ENCODE measurements at regions of chr11 and their contacts with region 1.

Region 1: DNA sequence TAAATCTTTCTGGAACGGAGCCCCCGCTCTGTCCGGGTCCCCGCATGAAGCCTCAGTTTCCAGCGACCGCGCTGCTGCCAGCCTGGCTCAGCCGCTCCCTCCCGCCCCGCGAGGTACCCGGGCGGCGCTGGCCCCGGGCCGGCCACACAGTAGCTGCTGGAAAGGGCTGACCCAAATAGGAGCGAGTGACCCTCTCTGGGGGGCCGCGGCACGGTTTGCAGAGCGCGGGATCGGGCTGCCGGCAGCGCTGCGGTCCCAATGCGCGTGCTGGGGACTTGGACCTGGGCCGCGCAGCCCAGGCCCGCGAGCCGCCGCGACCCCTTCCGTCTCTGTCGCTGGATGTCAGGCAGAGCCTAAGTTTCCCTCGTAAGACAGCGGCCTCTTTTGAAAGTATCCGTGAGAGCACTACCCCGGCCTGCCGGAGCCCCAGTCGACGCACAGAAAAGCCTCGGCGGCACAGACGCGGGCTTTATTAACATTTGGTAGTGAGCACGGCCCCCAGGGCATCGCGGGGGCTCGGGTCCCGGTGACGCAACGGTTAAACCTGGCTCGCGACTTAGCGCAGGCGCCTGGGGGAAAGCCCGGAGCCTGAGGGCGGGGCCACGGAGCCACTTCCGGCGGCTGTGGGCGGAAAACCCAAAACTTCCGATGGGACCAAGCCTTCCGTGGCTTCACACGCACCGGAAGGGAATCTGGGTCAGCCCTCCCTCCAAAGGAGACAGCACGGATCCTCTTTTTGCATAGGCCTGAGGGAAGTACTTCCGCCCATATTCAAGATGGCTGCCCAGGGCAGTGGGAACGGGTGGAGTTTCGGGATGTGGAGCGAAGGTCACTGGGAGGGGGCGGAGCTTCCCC is 14.9 kb downstream of the BAD start:
- DNase-seq: peak; percentile 99
- H3K4me3 Mint-ChIP-seq: peak overlapping the region; percentile 96
- H3K27ac Mint-ChIP-seq: peak overlapping the region; percentile 99
- H3K4me1 Mint-ChIP-seq: peaks cover 26% of the 10 kb centered on the region
- H3K27me3 Mint-ChIP-seq: no peaks in the 10 kb centered on the region

Region 2: DNA sequence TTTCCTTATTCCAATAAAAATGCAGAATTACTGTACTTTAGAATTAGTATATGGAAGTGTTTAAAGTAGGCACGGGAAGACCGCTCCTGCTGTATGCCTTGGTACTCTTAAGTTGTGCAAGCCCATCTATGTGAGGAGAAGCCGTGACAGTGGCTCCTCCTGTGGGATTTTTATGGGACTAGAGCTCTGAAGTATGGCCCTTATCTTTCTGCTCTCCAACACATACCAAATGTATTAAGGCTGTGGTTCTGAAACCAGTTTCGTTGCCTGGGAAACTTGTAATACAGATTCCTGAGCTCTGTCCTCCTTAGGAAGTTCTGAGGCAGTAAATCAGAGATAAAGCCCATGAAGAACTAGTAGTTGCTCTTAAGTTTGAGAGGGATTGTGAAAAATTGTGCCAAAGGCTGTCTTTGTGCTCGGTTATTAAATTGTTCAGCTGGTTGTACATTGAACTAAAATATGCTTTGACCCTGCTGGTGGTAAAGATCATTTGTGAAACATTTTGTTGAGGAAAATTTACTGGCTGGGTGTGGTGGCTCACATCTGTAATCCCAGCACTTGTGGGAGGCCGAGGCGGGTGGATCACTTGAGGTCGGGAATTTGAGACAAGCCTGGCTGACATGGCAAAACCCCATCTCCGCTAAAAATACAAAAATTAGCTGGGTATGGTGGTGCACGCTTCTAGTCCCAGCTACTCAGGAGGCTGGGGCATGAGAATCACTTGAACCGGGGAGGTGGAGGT is 559.0 kb before region 1 on chr11:
- intact Hi-C with region 1: no loop called
- DNase-seq: no peak
- H3K4me3 Mint-ChIP-seq: no peak overlapping the region
- H3K27ac Mint-ChIP-seq: no peak overlapping the region
- H3K4me1 Mint-ChIP-seq: peaks cover 2% of the 10 kb centered on the region
- H3K27me3 Mint-ChIP-seq: no peaks in the 10 kb centered on the region

Region 3: GRCh38 chr11:64246871-64247728 is 22.5 kb before region 1 on chr11 and contains the start of gene PPP1R14B:
- intact Hi-C with region 1: loop called (anchors 1 kb)
- DNase-seq: peak; percentile 95
- H3K4me3 Mint-ChIP-seq: peak within 1 kb of the TSS; percentile 90
- H3K27ac Mint-ChIP-seq: peak within 1 kb of the TSS; percentile 94
- H3K4me1 Mint-ChIP-seq: peaks cover 29% of the 10 kb centered on the region
- H3K27me3 Mint-ChIP-seq: no peaks in the 10 kb centered on the region
- total RNA-seq, gene PPP1R14B: 284 TPM in 2 replicates

Region 4: DNA sequence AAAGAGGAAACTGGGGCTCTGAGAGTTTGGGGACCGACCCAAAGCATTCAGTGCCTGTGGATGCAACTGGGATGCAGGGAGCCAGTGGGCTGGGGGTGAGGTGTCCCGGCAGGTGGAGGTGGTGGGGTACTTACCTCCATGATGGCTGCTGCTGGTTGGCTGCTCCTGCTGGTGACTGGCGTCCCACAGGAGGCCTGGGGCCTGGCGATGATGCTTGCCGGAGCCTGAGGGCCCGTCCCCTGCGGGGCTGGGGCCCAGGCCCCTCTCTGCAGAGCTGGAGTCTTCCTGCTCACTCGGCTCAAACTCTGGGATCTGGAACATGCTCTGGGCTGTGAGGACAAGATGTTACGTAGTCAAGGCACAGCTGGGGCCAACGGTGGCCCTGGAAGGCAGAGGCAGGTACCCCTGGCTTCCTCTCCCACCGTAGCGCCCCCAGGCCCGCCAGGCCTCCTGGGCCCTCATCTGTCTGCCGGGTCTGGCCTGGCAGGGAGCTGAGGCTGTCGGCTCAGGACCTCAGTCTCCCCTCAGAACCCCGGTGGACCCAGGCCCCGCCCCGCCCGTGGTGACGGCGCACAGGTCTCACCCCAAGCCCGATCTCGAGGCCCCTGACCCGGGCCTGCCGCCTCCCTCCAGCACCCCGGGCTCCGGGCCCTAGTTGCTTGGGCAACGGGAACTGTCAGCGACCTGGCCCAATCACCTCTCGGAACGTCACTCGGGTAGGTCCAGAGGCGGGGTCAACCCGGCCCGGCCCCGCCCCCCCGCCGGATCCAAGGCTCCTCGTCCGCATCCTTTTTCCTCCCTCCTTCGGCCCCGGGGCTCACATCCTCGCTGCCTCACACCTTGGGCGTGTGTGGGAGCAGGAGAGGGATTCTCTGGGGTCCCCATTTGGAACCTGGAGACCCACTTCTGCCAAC is 14.7 kb after region 1 on chr11 and contains the start of gene BAD:
- intact Hi-C with region 1: loop called (anchors 1 kb)
- DNase-seq: peak; percentile 97
- H3K4me3 Mint-ChIP-seq: peak within 1 kb of the TSS; percentile 89
- H3K27ac Mint-ChIP-seq: peak within 1 kb of the TSS; percentile 94
- H3K4me1 Mint-ChIP-seq: peaks cover 17% of the 10 kb centered on the region
- H3K27me3 Mint-ChIP-seq: no peaks in the 10 kb centered on the region
- total RNA-seq, gene BAD: 34.0 and 35.5 TPM in 2 replicates

Region 5: DNA sequence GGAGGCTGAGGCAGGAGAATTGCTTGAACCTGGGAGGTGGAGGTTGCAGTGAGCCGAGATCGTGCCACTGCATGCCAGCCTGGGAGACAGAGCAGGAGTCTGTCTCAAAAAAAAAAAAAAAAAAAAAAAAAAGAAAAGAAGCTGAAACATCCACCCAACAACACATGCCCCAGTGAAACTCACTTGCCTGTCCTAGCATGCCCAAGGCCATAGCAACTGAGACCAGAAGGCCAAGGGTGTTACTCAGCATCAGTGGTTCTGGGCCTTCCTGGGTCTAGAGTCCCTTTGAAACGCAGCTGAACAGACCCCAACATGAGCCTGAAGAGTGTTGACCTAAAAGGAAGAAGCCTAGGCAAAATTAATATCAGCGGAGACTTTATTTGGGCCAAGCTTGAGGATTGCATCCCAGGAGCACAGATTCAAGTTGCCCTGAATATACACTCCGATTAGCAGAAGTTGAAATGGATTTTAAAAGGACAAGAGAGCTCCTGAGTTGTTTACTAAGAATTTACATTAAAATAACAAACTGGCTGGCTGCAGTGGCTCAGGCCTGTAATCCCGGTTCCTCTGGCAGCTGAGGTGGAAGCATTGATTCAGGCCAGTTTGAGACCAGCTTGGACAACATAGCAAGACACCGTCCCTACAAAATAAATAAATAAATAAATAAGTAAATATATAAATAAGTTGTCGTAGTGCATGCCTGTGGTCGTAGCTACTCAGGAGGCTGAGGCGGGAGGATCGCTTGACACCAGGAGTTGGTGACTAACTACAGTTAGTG is 55.3 kb after region 1 on chr11:
- intact Hi-C with region 1: no loop called
- DNase-seq: no peak
- H3K4me3 Mint-ChIP-seq: no peak overlapping the region
- H3K27ac Mint-ChIP-seq: no peak overlapping the region
- H3K4me1 Mint-ChIP-seq: peaks cover 12% of the 10 kb centered on the region
- H3K27me3 Mint-ChIP-seq: no peaks in the 10 kb centered on the region

Region 6: DNA sequence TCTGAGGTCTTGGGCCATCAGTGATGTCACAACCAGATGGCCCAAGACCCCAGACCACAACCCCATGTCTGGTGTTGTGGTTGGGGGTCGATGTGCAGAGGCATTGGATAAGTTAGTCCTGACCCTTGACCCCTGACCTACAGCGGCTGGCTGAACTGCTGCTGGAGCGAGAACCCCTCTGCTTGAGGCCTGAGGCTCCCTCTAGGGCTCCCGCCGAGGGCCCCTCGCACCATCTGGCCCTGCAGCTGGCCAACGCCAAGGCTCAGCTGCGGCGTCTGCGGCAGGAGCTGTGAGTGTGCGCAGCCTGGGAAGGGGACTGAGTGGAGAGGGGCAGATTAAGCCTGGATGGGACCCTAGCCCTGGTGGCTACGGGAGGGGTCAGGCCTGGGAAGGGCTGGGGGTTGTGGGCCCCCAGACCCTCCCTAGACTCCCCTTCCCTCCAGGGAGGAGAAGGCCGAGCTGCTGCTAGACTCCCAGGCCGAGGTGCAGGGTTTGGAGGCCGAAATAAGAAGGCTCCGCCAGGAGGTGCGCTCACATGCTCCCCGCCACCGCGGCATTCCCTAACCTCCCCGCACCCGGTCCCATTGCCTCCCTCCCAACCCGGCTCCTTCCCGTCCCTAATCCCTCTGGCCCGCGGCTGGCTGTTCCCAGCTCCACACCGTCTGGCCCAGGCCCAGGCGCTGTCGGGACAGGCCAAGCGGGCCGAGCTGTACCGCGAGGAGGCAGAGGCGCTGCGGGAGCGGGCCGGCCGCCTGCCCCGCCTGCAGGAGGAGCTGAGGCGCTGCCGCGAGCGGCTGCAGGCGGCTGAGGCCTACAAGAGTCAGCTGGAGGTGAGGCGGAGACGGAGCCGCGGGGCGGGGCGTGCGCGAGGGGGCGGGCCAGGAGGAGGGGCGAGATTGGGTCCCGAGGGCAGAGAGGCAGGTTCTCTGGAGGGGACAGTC is 72.5 kb after region 1 on chr11:
- intact Hi-C with region 1: loop called (anchors 2 kb)
- DNase-seq: peak; percentile 98
- H3K4me3 Mint-ChIP-seq: peak overlapping the region; percentile 99
- H3K27ac Mint-ChIP-seq: no peak overlapping the region
- H3K4me1 Mint-ChIP-seq: peaks cover 31% of the 10 kb centered on the region
- H3K27me3 Mint-ChIP-seq: no peaks in the 10 kb centered on the region